GM10248 (cell line): ENCODE measurements at regions of chr1 and their contacts with region 1.

Region 1: GRCh38 chr1:230201445-230201844 is 134.4 kb downstream of the GALNT2 start:
- DNase-seq: no peak
- CTCF ChIP-seq: no peak

Region 2: DNA sequence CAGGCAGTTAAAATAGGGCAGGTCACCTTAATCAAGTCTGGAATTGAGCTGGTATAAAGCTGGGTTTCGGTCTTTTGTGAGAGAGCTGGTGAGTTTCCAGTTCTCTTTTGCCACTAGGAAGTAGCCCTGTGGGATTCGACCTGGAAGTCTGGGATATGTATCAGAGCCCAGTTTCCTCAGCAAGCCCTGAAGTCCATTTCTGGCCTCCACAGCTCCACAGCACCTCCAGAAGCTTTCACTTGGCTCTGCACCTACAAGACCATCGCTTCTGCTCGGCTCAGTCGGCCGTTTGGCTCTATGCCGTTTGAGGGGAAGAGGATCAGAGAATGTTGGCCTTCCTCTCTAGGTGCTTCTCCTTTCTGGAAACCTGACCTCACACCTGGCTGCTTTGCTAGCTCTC is 13.6 kb after region 1 on chr1:
- CTCF ChIA-PET with region 1: interaction called, 22 read pairs
- POLR2A ChIA-PET with region 1: no interaction called
- DNase-seq: no peak
- CTCF ChIP-seq: peak; percentile 18